ENCODE measurements at regions of chr13 and their contacts with region 1.

Region 1: GRCh38 chr13:97432917-97433726 is 847 bp upstream of the RAP2A start:
- DNase-seq: peak; percentile 100
- H3K4me3 ChIP-seq: peak overlapping the region; percentile 59
- H3K4me3 Mint-ChIP-seq: peak overlapping the region; percentile 94
- H3K27ac Mint-ChIP-seq: peak overlapping the region; percentile 98
- H3K4me1 ChIP-seq: peaks cover 7% of the 10 kb centered on the region; the same call in 1 of the 2 replicates
- H3K4me1 Mint-ChIP-seq: no peaks in the 10 kb centered on the region
- H3K27me3 ChIP-seq: no peaks in the 10 kb centered on the region
- H3K27me3 Mint-ChIP-seq: peaks cover 6% of the 10 kb centered on the region
- CTCF ChIP-seq: no peak

Region 2: DNA sequence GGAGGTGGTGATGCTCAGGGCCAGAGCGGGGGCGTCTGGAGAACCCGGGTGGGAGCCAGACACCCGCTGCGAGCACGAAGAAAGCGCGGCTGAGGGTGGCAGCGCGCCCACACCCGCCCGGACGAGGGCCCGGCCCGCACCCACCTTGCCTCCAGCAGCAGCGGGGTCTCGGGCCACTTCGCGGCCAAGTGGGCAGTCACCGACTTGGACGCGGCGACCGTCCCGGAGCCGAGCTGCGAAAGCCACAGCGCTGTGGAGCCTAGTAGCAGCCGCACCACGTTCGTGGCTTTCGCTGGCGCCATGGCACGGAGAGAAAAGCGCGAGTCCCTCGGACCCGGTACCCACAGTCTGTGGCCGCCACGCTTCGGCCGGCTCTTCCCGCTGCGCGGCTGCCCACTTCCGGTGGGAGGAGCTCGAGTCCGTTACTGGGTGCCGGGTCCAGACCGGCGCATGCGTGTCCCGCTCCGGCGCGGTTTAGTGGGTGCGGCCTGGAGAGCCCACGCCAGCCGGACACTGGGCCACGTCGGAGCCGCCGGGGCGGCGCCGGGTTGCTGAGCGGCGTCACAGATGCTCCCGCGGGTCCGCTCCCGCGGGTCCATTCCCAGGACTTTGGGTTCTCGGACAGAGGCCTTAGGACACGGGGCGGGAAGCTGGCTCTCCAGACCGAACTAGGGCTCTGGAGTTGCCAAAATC is 1380.0 kb before region 1 on chr13 and contains the start of gene UGGT2:
- CTCF ChIA-PET with region 1: no interaction called
- POLR2A ChIA-PET with region 1: interaction called, 5 read pairs
- intact Hi-C with region 1: loop called (anchors 2 kb)
- DNase-seq: peak; percentile 96 to 97
- H3K4me3 ChIP-seq: peak within 1 kb of the TSS; percentile 100
- H3K4me3 Mint-ChIP-seq: peak within 1 kb of the TSS; percentile 87
- H3K27ac Mint-ChIP-seq: peak within 1 kb of the TSS; percentile 88
- H3K4me1 ChIP-seq: no peaks in the 10 kb centered on the region
- H3K4me1 Mint-ChIP-seq: no peaks in the 10 kb centered on the region
- H3K27me3 ChIP-seq: no peaks in the 10 kb centered on the region
- H3K27me3 Mint-ChIP-seq: peaks cover 2% of the 10 kb centered on the region
- CTCF ChIP-seq: no peak
- total RNA-seq, gene UGGT2: 35.5 and 42.0 TPM in 2 replicates

Region 3: DNA sequence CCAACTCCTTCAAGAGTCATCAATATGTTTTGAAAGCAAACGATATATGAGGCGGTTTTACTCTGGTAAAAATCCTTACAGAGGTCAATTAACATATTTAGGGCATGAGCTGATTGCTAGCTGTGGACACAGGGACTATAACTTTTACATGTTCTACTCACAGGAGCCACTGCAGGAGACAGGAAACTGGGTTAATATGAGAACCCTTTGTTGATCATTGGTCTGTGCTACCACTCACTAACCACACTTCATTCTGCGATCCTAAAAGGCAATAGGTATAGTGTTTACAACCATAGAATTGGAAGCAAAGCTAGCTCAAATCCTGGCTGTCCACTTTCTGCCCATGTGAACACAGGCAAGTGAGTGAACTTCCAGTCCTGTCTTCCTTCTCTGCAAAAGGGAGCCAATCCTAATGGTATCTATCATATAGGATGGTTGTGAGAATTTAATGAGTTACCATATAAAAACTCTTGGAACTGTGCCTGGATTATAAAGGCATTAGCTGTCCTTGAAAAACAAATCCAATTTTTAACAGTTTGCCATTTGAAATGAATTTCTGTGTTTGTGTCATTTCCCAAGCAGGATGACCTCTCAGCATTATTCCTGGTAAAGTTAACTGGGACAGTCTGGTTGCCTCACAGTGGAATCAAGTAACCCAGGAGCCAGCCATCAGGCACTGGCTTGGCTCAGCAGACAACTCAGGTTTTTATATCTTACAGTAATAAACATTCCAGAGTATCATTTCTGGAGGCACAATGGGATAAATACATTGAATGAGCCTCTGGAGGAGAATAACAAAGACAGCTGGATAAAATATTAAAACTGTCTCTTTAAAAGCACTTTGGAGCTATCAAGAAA is 29.0 kb before region 1 on chr13:
- CTCF ChIA-PET with region 1: no interaction called
- POLR2A ChIA-PET with region 1: no interaction called
- intact Hi-C with region 1: no loop called
- DNase-seq: no peak
- H3K4me3 ChIP-seq: no peak overlapping the region
- H3K4me3 Mint-ChIP-seq: no peak overlapping the region
- H3K27ac Mint-ChIP-seq: no peak overlapping the region
- H3K4me1 ChIP-seq: no peaks in the 10 kb centered on the region
- H3K4me1 Mint-ChIP-seq: no peaks in the 10 kb centered on the region
- H3K27me3 ChIP-seq: no peaks in the 10 kb centered on the region
- H3K27me3 Mint-ChIP-seq: peaks cover 19% of the 10 kb centered on the region
- CTCF ChIP-seq: no peak

Region 4: GRCh38 chr13:97448503-97449230 is 15.5 kb after region 1 on chr13:
- CTCF ChIA-PET with region 1: interaction called, 7 read pairs
- POLR2A ChIA-PET with region 1: interaction called, 10 read pairs
- intact Hi-C with region 1: no loop called
- DNase-seq: peak; percentile 52 to 59
- H3K4me3 ChIP-seq: no peak overlapping the region
- H3K4me3 Mint-ChIP-seq: no peak overlapping the region
- H3K27ac Mint-ChIP-seq: peak overlapping the region; percentile 7
- H3K4me1 ChIP-seq: peaks cover 3% of the 10 kb centered on the region; the same call in 1 of the 2 replicates
- H3K4me1 Mint-ChIP-seq: peaks cover 11% of the 10 kb centered on the region
- H3K27me3 ChIP-seq: no peaks in the 10 kb centered on the region
- H3K27me3 Mint-ChIP-seq: no peaks in the 10 kb centered on the region
- CTCF ChIP-seq: no peak

Region 5: GRCh38 chr13:97506511-97506910 is 73.4 kb after region 1 on chr13:
- CTCF ChIA-PET with region 1: no interaction called
- POLR2A ChIA-PET with region 1: no interaction called
- intact Hi-C with region 1: loop called (anchors 2 kb)
- DNase-seq: no peak
- H3K4me3 ChIP-seq: no peak overlapping the region
- H3K4me3 Mint-ChIP-seq: no peak overlapping the region
- H3K27ac Mint-ChIP-seq: no peak overlapping the region
- H3K4me1 ChIP-seq: no peaks in the 10 kb centered on the region
- H3K4me1 Mint-ChIP-seq: no peaks in the 10 kb centered on the region
- H3K27me3 ChIP-seq: no peaks in the 10 kb centered on the region
- H3K27me3 Mint-ChIP-seq: peaks cover 2% of the 10 kb centered on the region
- CTCF ChIP-seq: no peak

Region 6: GRCh38 chr13:97574926-97575325 is 141.8 kb after region 1 on chr13:
- CTCF ChIA-PET with region 1: interaction called, 4 read pairs
- POLR2A ChIA-PET with region 1: no interaction called
- intact Hi-C with region 1: loop called (anchors 2 kb)
- DNase-seq: peak; percentile 54 to 62
- H3K4me3 ChIP-seq: no peak overlapping the region
- H3K4me3 Mint-ChIP-seq: no peak overlapping the region
- H3K27ac Mint-ChIP-seq: no peak overlapping the region
- H3K4me1 ChIP-seq: 0 out of 2 replicates have a peak, but pooled peaks cover 3% of the 10 kb centered on the region
- H3K4me1 Mint-ChIP-seq: peaks cover 3% of the 10 kb centered on the region
- H3K27me3 ChIP-seq: no peaks in the 10 kb centered on the region
- H3K27me3 Mint-ChIP-seq: no peaks in the 10 kb centered on the region
- CTCF ChIP-seq: peak; percentile 55

Region 7: DNA sequence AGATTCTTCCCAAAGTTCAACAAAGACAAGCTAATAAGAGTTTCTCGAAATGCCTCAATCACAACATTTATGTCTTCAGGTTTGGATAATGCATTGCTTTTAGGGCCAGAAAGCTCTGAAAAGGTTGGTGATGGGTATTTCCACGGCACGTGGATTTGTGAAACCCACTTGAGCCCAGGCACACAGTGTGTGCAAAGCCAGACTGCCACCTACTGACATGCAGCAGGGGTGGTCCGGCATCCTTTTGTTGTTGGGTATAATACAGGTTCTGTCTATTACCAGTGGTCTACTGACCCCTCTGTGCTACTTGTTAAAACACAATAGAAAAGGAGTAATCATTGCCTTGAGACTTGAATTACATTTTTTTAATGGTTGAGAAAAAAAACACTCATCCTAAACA is 226.5 kb after region 1 on chr13:
- CTCF ChIA-PET with region 1: interaction called, 7 read pairs
- POLR2A ChIA-PET with region 1: no interaction called
- intact Hi-C with region 1: loop called (anchors 2 kb)
- DNase-seq: peak in 1 of 2 experiments; percentile 27
- H3K4me3 ChIP-seq: no peak overlapping the region
- H3K4me3 Mint-ChIP-seq: no peak overlapping the region
- H3K27ac Mint-ChIP-seq: no peak overlapping the region
- H3K4me1 ChIP-seq: no peaks in the 10 kb centered on the region
- H3K4me1 Mint-ChIP-seq: no peaks in the 10 kb centered on the region
- H3K27me3 ChIP-seq: no peaks in the 10 kb centered on the region; the same call in 1 of the 2 replicates
- H3K27me3 Mint-ChIP-seq: peaks cover 17% of the 10 kb centered on the region
- CTCF ChIP-seq: peak; percentile 28 to 56

Region 8: DNA sequence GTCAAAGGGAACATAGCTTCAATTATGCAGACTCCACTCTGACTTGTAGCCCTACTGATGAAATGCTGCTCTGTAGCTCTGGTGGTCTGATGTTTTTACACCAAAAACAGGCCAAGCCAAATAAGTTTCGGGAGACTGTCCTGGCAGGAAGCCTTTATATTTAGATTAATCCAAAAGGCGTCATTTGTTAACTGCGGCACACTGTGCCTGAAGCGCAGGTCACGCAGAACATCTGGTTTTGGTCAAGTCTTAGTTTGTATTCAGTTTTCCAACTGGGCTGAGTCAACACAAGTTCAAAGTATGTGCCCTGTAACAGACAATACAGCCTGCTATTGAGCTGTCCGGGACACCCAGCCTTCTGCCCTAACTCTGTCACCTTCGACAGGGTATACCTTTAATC is 365.7 kb after region 1 on chr13:
- CTCF ChIA-PET with region 1: no interaction called
- POLR2A ChIA-PET with region 1: no interaction called
- intact Hi-C with region 1: loop called (anchors 2 kb)
- DNase-seq: no peak
- H3K4me3 ChIP-seq: no peak overlapping the region
- H3K4me3 Mint-ChIP-seq: no peak overlapping the region
- H3K27ac Mint-ChIP-seq: no peak overlapping the region
- H3K4me1 ChIP-seq: no peaks in the 10 kb centered on the region
- H3K4me1 Mint-ChIP-seq: no peaks in the 10 kb centered on the region
- H3K27me3 ChIP-seq: no peaks in the 10 kb centered on the region
- H3K27me3 Mint-ChIP-seq: no peaks in the 10 kb centered on the region
- CTCF ChIP-seq: no peak